ENCODE measurements at regions of chr5 and their contacts with region 1.

Region 1: GRCh38 chr5:132386644-132387286 is 17.3 kb downstream of the SLC22A5 start:
- DNase-seq: peak; percentile 57 to 84 (median 74)
- H3K4me3 ChIP-seq: no peak overlapping the region
- H3K27ac ChIP-seq: peak overlapping the region in 41 of 59 donors; percentile 2 to 87 (median 61)
- H3K27me3 ChIP-seq: no peaks in the 10 kb centered on the region
- CTCF ChIP-seq: peak; percentile 36 to 92 (median 86)

Region 2: GRCh38 chr5:132180134-132180745 is 206.5 kb before region 1 on chr5:
- intact Hi-C with region 1: loop called in 1 of 2 experiments (anchors 10 kb)
- DNase-seq: peak in 1 of 10 donors; percentile 9
- H3K4me3 ChIP-seq: peak overlapping the region in 12 of 59 donors; percentile 1 to 33 (median 6)
- H3K27ac ChIP-seq: no peak overlapping the region
- H3K27me3 ChIP-seq: no peaks in the 10 kb centered on the region
- CTCF ChIP-seq: peak; percentile 45 to 80 (median 71)

Region 3: DNA sequence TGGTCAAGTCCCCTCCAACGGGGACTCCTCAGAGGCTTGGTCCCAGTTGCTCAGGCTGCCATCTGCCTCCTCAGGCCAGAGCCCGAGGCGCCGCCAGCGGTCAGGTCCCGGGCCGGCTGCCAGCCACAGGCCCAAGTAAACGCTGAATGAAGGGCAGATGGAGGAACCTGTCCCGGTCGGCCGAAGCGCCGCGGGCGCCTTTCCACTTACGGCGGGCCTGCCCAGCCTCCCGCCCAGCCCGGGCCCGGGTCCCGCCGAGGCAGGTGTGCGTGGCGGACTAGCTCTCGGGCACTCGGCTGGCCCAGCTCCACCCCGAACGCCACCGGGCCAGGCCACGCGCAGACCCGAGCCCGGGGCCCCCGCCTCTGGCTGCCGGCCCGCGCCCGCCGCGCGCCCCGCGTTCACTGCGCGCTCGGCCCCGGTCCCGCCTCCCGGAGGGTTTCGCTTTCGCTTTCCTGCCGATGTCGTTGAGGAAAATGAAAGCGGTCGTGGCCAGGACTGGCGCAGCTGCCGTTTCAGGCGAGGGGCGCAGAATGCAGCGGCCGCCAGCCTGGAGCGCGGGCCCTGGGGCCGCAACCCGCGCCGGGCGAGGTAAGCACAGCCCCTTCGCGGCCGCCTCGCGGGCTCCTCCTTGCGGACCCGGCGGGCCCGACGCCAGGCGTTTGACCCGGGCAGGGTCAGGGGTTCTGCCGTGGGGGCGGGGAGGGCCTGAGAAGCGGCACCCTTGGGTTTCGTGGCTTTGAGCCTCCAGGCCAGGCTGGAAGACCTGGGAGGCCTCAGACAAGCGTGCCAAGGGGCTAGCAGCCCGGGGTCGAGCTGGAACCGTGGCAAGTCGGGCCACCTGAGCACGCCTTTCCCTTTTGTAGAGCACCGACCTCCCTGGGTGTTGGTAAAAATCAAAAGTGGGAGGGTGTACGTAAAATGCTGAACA is 24.0 kb after region 1 on chr5:
- intact Hi-C with region 1: loop called in 1 of 2 experiments (anchors 2 kb)
- DNase-seq: peak in 9 of 10 donors; percentile 55 to 83 (median 62)
- H3K4me3 ChIP-seq: peak overlapping the region; percentile 63 to 95 (median 83)
- H3K27ac ChIP-seq: peak overlapping the region; percentile 88 to 99 (median 97)
- H3K27me3 ChIP-seq: no peaks in the 10 kb centered on the region
- CTCF ChIP-seq: peak in 55 of 56 donors; percentile 13 to 73 (median 53)

Region 4: GRCh38 chr5:132500931-132501630 is 114.3 kb after region 1 on chr5:
- intact Hi-C with region 1: loop called (anchors 1 kb)
- DNase-seq: peak in 4 of 10 donors; percentile 44 to 77 (median 52)
- H3K4me3 ChIP-seq: no peak overlapping the region
- H3K27ac ChIP-seq: peak overlapping the region in 21 of 59 donors; percentile 17 to 60 (median 48)
- H3K27me3 ChIP-seq: no peaks in the 10 kb centered on the region
- CTCF ChIP-seq: peak; percentile 33 to 95 (median 88)

Region 5: DNA sequence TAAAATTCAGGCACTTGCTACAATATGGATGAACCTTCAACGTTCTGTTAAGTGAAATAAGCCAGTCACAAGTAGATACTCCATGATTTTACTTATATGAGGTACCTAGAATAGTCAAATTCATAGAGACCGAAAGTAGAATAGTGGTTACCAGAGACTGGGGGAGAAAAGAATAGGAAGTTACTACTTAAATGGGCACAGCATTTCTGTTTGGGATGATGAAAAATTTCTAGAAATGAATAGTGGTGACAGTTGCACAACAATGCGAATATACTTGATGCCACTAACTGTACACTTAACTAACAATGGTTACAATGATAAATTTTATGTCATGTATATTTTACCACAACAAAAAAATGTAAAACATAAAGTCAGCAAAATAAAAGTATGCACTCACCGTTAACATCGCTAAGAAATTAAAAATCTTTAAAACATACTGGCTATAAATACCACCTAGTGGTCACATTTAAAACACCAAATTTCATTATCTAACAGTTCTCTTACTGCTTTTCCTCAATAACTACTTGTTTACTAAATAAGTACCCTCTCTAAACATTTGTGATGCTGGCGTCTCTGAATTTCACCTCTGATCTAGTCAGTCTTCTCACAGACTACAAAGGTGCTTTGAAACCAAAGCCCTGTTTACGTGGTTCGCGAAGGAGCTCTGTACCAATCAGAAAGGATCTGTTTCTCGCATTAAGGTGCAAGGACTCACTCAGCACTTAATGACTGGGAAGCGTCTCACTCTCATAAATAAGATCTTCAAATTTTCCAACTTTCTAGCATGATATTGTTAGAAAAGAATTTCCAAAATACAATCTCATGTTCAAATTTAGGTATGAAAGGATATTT is 327.9 kb after region 1 on chr5:
- intact Hi-C with region 1: no loop called
- DNase-seq: no peak
- H3K4me3 ChIP-seq: peak overlapping the region in 5 of 59 donors; percentile 1 to 18 (median 8)
- H3K27ac ChIP-seq: peak overlapping the region in 12 of 59 donors; percentile 1 to 58 (median 23)
- H3K27me3 ChIP-seq: no peaks in the 10 kb centered on the region
- CTCF ChIP-seq: peak; percentile 38 to 69 (median 51)

Region 6: GRCh38 chr5:132753135-132753987 is 366.6 kb after region 1 on chr5:
- intact Hi-C with region 1: loop called in 1 of 2 experiments (anchors 10 kb)
- DNase-seq: peak in 9 of 10 donors; percentile 67 to 87 (median 81)
- H3K4me3 ChIP-seq: no peak overlapping the region
- H3K27ac ChIP-seq: peak overlapping the region in 58 of 59 donors; percentile 27 to 94 (median 82)
- H3K27me3 ChIP-seq: no peaks in the 10 kb centered on the region
- CTCF ChIP-seq: peak in 50 of 56 donors; percentile 22 to 71 (median 48)

Measured in dorsolateral prefrontal cortex (tissue), 120 donors.